A549 (cell line): ENCODE measurements at regions of chr11 and their contacts with region 1.

Region 1: DNA sequence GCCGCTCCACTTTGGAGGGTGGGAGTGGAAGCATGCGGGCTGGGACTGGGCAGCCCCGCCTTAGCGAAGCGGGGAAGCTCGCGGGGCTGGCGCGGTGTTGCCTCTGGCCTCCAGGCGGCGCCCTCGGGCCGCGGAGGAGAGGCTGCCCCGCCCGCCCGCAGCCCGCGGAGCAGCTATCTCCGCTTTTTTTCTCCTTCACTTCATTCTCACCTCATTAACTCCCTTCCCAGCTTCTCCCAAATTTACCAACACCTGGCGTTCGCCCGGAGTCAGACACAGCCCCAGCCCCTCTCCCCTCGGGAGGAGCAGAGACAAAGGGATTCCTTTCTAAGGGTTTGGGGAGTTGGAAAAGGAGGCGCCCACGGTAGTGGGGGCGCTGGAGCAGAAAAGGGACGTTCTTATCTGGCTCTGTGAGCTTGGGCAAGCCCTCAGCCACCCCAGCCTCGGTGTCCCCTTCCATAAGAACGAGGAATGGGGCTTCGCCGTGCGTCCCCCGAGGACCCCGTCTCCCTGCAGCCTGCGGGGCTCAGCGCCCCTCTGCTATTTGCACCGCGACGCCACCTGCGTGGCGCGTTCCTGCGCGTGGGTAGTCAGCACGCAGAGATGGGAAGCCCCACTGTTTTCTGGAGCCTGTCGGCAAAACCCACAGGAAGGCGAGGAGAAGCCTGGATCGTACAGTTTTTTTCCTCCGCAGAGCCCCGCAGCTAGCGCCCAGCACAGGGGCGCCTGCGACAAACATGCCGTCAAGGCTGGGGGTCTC is 1.5 kb upstream of the WNT11 start:
- DNase-seq: peak; percentile 85 to 89
- ATAC-seq: peak; percentile 52 to 79
- H3K4me3 ChIP-seq: peak overlapping the region; percentile 60
- H3K27ac ChIP-seq: peak overlapping the region; percentile 70 to 85; a peak in 5 of 6 replicates
- H3K4me1 ChIP-seq: 0 out of 3 replicates have a peak, but pooled peaks cover 9% of the 10 kb centered on the region
- CTCF ChIP-seq: peak; percentile 99
- EP300 ChIP-seq: no peak
- POLR2A ChIP-seq: no peak
- RAD21 ChIP-seq: peak; percentile 79 to 95

Region 2: DNA sequence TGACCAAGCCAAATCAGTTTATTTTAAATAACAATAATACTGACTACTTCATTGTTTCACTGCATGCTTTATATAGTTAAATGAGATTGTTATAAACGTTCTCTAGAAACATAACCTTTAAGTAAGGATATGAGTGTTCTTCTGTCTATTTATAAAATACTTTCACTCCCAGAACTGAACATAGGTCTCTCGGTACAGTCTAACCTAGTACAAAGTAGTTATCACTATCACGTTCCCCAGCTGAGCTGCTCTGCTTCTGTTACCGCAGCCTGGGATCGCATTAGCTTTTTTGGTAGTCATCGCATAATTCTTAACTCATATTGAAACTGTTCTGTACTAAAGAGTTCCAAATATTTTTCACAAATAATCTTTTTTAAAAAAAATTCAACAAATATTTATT is 145.1 kb before region 1 on chr11:
- CTCF ChIA-PET with region 1: no interaction called
- POLR2A ChIA-PET with region 1: no interaction called
- DNase-seq: no peak
- ATAC-seq: no peak
- H3K4me3 ChIP-seq: no peak overlapping the region
- H3K27ac ChIP-seq: no peak overlapping the region
- H3K4me1 ChIP-seq: no peaks in the 10 kb centered on the region
- CTCF ChIP-seq: no peak
- EP300 ChIP-seq: no peak
- POLR2A ChIP-seq: no peak
- RAD21 ChIP-seq: no peak

Region 3: DNA sequence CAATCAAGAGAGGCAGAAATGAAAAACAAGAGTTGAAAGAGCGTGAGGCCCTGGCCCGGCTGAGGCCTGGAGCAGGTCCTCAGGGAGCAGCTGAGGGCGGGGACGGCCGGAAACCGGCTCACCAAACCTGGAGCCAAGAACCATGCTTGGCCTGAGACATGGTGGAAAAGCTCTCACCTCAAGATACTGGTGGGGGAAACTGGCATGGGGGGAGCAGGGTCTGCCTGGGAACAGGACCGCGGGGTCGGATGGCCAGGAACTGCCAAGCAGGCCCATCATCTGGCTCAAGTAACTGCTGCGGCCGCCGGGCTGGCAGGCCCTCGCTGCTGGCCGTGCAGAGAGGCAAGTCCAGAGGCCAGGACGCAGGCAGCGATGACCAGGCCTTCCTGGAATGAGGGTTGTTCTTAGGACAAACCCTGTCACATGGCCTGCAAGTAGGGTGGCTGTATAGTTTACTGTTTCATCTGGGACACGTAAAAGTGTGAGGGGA is 17.3 kb after region 1 on chr11:
- CTCF ChIA-PET with region 1: interaction called, 86 read pairs
- POLR2A ChIA-PET with region 1: no interaction called
- DNase-seq: no peak
- ATAC-seq: no peak
- H3K4me3 ChIP-seq: no peak overlapping the region
- H3K27ac ChIP-seq: no peak overlapping the region
- H3K4me1 ChIP-seq: no peaks in the 10 kb centered on the region
- CTCF ChIP-seq: no peak
- EP300 ChIP-seq: no peak
- POLR2A ChIP-seq: no peak
- RAD21 ChIP-seq: no peak

Region 4: DNA sequence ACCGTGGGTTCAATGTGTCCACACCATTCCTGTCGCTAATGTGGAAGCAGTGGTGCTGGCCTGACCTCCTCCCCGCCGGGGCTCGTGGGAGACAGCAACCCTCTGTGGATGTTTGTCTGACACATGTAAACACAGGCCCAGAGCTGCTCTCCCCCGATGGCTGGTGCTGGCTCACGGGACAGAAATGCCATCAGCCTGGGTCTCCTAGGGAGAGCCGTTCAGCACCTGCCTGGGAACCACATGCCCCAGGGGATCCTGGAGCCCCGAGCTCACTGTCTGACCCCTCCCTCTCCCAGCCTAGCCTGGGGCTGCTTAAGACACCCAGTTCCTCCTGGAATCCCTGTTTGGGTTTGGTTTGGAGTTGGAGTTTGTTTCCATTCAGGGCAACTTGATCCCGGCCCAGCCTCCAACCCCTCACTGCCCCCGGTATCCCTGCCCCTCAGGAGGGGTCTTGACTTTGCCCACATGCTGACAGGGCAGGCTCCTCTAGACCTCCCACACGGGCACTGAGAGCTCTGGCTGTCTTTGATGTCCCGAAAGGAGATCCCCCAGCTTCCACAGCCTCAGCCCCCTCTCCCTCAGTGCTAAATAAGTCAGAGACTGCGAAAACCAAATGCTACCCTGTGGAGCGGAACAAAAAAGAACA is 49.4 kb after region 1 on chr11:
- CTCF ChIA-PET with region 1: interaction called, 23 read pairs
- POLR2A ChIA-PET with region 1: no interaction called
- DNase-seq: no peak
- ATAC-seq: peak in 1 of 2 experiments; percentile 30; a peak in 3 of 6 replicates
- H3K4me3 ChIP-seq: no peak overlapping the region
- H3K27ac ChIP-seq: no peak overlapping the region
- H3K4me1 ChIP-seq: no peaks in the 10 kb centered on the region
- CTCF ChIP-seq: no peak
- EP300 ChIP-seq: no peak
- POLR2A ChIP-seq: no peak
- RAD21 ChIP-seq: no peak

Region 5: GRCh38 chr11:76296731-76297542 is 89.1 kb after region 1 on chr11:
- CTCF ChIA-PET with region 1: interaction called, 30 read pairs
- POLR2A ChIA-PET with region 1: no interaction called
- DNase-seq: no peak
- ATAC-seq: no peak; a peak in 1 of 6 replicates
- H3K4me3 ChIP-seq: no peak overlapping the region
- H3K27ac ChIP-seq: no peak overlapping the region
- H3K4me1 ChIP-seq: no peaks in the 10 kb centered on the region
- CTCF ChIP-seq: no peak
- EP300 ChIP-seq: no peak
- POLR2A ChIP-seq: no peak
- RAD21 ChIP-seq: no peak

Region 6: DNA sequence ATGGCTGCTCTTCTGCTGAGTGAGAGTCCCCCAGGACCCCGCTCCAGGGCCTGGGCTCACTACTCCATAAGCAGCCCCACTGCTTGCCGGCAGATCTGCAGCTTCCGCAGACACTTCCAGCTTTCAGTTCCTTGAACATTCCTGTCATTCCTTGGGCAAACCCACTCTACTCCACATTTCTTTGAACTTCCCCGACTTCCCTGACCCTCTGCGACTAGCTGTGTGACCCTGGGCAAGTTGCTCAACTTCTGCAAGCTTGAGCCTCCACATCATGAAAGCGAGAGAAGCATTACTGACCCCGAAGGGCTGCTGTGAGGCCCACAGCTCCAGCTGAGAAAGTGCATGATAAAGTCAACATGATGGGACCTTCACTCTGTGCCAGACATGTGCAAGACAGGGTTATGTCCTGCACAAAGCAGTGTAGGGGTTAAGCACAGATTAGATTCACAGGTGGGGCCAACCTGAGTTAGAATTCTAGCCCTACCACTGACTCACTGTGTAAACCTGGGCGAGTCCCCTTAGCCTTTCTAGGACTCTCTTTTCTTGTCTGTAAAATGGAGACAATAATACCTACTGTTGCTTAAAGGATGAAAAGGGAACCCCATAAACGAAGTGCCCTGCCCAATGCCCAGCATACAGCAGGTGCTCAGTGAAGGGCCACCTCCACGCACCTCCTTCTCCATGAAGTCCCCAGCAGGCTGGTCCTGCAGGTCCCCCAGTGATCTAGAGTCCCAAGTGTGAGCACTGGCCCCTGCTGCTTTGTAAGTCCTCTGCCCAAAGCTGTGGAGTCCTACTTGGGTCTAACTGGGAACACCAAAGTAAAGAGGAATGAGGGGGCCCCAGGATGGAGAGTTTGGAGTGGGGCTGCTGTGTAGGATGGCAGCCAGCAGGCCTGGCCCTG is 121.5 kb after region 1 on chr11:
- CTCF ChIA-PET with region 1: interaction called, 222 read pairs
- POLR2A ChIA-PET with region 1: no interaction called
- DNase-seq: no peak
- ATAC-seq: no peak; a peak in 2 of 6 replicates
- H3K4me3 ChIP-seq: no peak overlapping the region
- H3K27ac ChIP-seq: no peak overlapping the region
- H3K4me1 ChIP-seq: no peaks in the 10 kb centered on the region
- CTCF ChIP-seq: no peak
- EP300 ChIP-seq: no peak
- POLR2A ChIP-seq: no peak
- RAD21 ChIP-seq: no peak

Region 7: DNA sequence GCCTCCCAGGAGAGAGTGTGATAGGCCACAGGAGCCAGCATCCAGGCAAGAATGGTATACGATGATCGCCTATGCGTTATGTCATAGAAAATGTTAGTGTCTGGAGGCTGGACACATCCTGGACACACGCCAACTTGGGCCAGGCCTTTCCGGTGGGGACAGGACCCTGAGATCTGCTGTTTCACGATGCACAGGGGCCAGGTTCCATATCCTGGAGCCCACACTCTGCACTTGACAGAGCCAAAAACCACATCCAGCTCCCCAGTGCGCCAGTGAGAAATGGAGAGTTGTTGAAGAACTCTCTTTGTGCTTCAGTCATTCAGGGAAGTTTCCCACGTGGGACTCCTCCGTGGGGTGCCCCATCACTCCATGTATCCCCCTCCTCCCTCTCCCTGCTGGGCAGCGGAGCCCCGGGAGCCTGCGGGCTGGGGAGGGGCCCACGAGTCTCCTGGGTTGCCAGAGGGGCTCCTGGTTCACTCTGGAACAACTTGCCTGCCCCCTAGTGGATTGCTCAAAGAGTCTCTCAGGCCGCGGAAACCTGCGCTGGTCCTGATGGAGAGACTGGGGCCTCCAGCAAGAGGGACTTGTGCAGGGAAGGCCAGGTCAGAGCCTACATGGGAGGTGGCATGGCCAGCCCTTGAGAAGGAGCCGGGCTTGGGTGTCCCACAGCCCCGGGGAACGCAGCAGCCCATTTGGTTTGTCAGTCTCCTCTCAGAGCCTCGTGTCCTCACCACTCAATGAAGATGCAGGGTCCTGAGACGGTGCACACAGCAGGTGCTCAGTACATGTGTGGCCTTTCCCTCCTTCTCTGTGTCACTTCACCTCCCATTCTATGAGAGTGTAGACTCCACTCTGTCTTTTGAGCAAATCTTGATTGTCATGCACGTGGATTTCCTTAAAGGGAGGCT is 472.9 kb after region 1 on chr11:
- CTCF ChIA-PET with region 1: interaction called, 11 read pairs
- POLR2A ChIA-PET with region 1: no interaction called
- DNase-seq: peak; percentile 73 to 88
- ATAC-seq: peak; percentile 77 to 95; a peak in 5 of 6 replicates
- H3K4me3 ChIP-seq: no peak overlapping the region
- H3K27ac ChIP-seq: peak overlapping the region in 1 of 2 experiments; percentile 63; a peak in 2 of 6 replicates
- H3K4me1 ChIP-seq: no peaks in the 10 kb centered on the region
- CTCF ChIP-seq: peak; percentile 87
- EP300 ChIP-seq: no peak
- POLR2A ChIP-seq: no peak
- RAD21 ChIP-seq: peak; percentile 88 to 90

Region 8: DNA sequence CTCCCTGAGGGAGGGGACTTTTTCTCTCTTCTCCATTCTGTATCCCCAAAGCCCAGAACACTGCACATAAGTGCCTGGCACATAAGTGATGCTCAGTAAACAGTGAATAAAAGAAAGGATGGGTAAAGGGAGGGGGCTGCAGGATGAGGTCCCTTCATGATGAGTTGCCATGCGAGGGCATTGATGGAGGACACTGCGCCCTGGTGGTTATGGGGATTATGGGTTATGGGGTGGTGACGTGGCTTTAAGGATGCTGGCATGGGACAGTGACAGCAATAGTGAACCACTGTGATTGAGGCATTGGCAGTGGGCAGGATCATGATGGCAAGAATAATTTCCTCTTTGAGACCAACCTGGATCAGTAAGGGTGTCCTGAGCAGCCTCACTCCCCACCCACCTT is 506.7 kb after region 1 on chr11:
- CTCF ChIA-PET with region 1: no interaction called
- POLR2A ChIA-PET with region 1: no interaction called
- DNase-seq: no peak
- ATAC-seq: peak in 1 of 2 experiments; percentile 46; a peak in 3 of 6 replicates
- H3K4me3 ChIP-seq: no peak overlapping the region
- H3K27ac ChIP-seq: no peak overlapping the region
- H3K4me1 ChIP-seq: no peaks in the 10 kb centered on the region
- CTCF ChIP-seq: no peak
- EP300 ChIP-seq: no peak
- POLR2A ChIP-seq: no peak
- RAD21 ChIP-seq: no peak